CD4-positive, alpha-beta T cell (primary cell): ENCODE measurements at regions of chr1 and their contacts with region 1.

Region 1: DNA sequence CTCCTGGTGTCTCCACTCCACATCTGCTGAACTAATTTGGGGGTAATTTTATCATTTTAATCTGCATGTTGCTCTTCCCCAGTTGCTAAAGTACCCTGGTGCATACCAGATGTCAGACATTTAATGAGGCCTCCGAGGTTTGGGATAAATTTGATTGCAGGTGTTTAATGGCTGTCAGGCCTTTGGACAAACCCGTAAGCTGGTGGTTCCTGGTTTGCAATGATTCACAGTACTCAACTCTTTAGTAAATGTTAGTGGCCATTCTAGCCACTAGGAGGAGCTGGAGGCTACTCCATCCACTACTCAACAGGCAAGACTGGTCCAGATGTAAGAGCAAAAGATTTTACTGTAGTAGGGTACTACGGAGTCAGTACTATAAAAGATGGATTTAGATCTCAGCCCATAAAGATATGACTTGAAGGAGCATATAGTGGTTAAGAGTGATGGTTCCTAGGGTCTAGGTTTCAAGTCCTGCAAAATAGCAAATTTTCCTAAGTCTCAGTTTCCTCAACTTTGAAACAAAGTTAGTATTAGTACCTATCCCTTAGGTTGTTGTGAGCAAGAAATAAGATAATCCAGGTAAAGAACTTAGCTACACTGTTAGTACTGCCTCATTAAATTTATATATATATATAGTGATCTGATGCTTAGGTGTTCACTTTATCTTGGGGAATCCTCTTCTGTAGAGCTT is 132.8 kb downstream of the SNX7 start:
- DNase-seq: peak; percentile 25 to 83 (median 36)
- ATAC-seq: peak; percentile 90
- H3K4me3 ChIP-seq: no peak overlapping the region
- H3K4me3 Mint-ChIP-seq: no peak overlapping the region
- H3K27ac ChIP-seq: no peak overlapping the region
- H3K27ac Mint-ChIP-seq: no peak overlapping the region
- H3K4me1 ChIP-seq: peaks cover 4% of the 10 kb centered on the region
- H3K4me1 Mint-ChIP-seq: peaks cover 35% of the 10 kb centered on the region
- H3K27me3 ChIP-seq: no peaks in the 10 kb centered on the region
- H3K27me3 Mint-ChIP-seq: no peaks in the 10 kb centered on the region
- CTCF ChIP-seq: peak; percentile 76

Region 2: DNA sequence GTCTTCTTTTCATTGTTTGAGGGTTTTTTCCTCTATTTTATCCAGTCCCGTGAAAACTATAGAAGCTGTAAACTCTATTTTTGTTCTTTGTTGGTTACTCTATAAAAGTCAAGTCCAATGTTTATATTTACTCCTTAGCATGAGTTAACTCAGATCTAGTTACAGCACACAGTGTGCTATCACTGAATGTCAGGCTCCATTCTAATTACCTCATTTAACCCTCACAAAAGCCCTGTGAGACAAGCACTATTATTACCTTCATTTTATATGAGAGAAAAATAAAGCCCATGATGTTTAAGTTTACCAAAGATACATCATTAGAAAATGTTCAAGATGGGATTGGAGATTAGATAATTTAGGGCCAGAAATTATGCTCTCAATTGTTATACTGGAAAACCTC is 384.3 kb before region 1 on chr1:
- CTCF ChIA-PET with region 1: no interaction called
- POLR2A ChIA-PET with region 1: no interaction called
- intact Hi-C with region 1: no loop called
- DNase-seq: no peak
- ATAC-seq: no peak
- H3K4me3 ChIP-seq: no peak overlapping the region
- H3K4me3 Mint-ChIP-seq: no peak overlapping the region
- H3K27ac ChIP-seq: no peak overlapping the region
- H3K27ac Mint-ChIP-seq: no peak overlapping the region
- H3K4me1 ChIP-seq: no peaks in the 10 kb centered on the region
- H3K4me1 Mint-ChIP-seq: peaks cover 4% of the 10 kb centered on the region
- H3K27me3 ChIP-seq: no peaks in the 10 kb centered on the region
- H3K27me3 Mint-ChIP-seq: no peaks in the 10 kb centered on the region
- CTCF ChIP-seq: no peak

Region 3: DNA sequence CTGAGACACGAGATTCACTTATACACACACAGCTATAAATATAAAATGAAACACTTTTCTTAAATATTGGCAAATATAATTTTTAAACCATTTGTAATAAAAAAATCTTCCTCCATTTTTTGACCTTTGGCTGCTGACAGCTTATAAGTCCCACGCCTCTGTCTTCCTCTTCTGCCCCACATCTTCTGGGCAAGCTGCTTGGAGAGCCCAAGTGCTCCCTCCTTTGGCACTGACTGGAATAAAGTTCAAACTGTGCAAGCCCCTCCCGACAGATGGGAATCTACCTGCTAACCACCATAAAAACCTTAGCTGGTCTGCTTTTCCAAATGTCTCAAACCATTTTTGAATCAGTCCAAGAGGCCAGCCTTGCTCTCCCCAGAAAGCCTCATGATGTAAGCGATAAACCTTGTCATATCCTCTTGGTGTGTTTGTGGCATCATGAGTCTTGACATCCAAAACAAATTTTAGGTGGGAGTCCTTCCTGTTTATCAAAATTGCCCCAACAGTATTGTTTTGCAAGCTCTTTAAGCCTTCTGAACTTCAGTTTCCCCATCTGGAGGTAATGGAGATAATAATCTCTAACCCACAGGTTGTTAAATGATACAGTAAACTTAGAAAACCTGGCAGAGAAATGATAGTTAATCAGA is 33.0 kb before region 1 on chr1:
- CTCF ChIA-PET with region 1: no interaction called
- POLR2A ChIA-PET with region 1: no interaction called
- intact Hi-C with region 1: no loop called
- DNase-seq: peak in 1 of 14 experiments; percentile 5
- ATAC-seq: no peak
- H3K4me3 ChIP-seq: no peak overlapping the region
- H3K4me3 Mint-ChIP-seq: no peak overlapping the region
- H3K27ac ChIP-seq: no peak overlapping the region
- H3K27ac Mint-ChIP-seq: no peak overlapping the region
- H3K4me1 ChIP-seq: no peaks in the 10 kb centered on the region
- H3K4me1 Mint-ChIP-seq: no peaks in the 10 kb centered on the region
- H3K27me3 ChIP-seq: no peaks in the 10 kb centered on the region
- H3K27me3 Mint-ChIP-seq: no peaks in the 10 kb centered on the region
- CTCF ChIP-seq: no peak

Region 4: GRCh38 chr1:98870959-98871903 is 76.9 kb after region 1 on chr1:
- CTCF ChIA-PET with region 1: interaction called, 3 read pairs
- POLR2A ChIA-PET with region 1: interaction called, 31 read pairs
- intact Hi-C with region 1: loop called in 1 of 2 experiments (anchors 2 kb)
- DNase-seq: peak in 12 of 14 experiments; percentile 8 to 96 (median 41)
- ATAC-seq: peak; percentile 92
- H3K4me3 ChIP-seq: peak overlapping the region; percentile 48
- H3K4me3 Mint-ChIP-seq: peak overlapping the region; percentile 86
- H3K27ac ChIP-seq: peak overlapping the region; percentile 59 to 84
- H3K27ac Mint-ChIP-seq: peak overlapping the region; percentile 91
- H3K4me1 ChIP-seq: peaks cover 18% of the 10 kb centered on the region
- H3K4me1 Mint-ChIP-seq: peaks cover 55% of the 10 kb centered on the region
- H3K27me3 ChIP-seq: no peaks in the 10 kb centered on the region
- H3K27me3 Mint-ChIP-seq: no peaks in the 10 kb centered on the region
- CTCF ChIP-seq: no peak

Region 5: DNA sequence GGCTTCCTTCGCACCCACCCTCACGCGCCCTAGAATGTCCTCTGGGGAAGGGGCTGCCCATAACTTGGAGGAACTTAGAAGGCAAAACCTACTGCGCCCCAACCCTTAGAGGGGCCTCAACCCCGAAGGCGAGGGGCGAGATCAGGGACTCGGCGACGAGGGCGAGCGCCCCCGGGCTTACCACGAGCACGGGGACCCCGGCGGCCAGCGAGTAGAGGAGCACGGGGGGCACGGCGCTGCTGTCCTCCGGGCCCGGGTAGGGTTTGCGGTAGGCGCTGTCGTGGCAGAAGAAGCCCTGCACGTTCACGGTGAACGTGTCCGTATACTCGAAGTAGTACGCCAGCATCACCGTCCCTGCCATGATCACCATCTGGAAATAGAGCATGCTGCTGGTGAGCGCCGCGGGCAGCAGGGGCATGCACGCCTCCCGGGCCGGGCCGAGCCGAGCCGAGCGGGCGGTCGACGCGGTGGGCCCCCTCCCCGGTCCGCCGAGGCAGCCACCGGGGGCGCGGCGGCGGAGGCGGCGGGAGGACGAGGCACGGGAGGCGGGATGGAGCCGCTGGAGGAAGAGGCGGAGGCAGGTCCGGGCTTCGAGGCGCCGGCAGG is 210.0 kb after region 1 on chr1:
- CTCF ChIA-PET with region 1: no interaction called
- POLR2A ChIA-PET with region 1: no interaction called
- intact Hi-C with region 1: loop called (anchors 10 kb)
- DNase-seq: peak in 11 of 14 experiments; percentile 3 to 48 (median 10)
- ATAC-seq: peak; percentile 52
- H3K4me3 ChIP-seq: peak overlapping the region; percentile 33
- H3K4me3 Mint-ChIP-seq: peak overlapping the region; percentile 67
- H3K27ac ChIP-seq: no peak overlapping the region
- H3K27ac Mint-ChIP-seq: no peak overlapping the region
- H3K4me1 ChIP-seq: peaks cover 13% of the 10 kb centered on the region
- H3K4me1 Mint-ChIP-seq: peaks cover 11% of the 10 kb centered on the region
- H3K27me3 ChIP-seq: peaks cover 42 to 45% of the 10 kb centered on the region in 2 experiments
- H3K27me3 Mint-ChIP-seq: peaks cover 87% of the 10 kb centered on the region
- CTCF ChIP-seq: no peak

Region 6: DNA sequence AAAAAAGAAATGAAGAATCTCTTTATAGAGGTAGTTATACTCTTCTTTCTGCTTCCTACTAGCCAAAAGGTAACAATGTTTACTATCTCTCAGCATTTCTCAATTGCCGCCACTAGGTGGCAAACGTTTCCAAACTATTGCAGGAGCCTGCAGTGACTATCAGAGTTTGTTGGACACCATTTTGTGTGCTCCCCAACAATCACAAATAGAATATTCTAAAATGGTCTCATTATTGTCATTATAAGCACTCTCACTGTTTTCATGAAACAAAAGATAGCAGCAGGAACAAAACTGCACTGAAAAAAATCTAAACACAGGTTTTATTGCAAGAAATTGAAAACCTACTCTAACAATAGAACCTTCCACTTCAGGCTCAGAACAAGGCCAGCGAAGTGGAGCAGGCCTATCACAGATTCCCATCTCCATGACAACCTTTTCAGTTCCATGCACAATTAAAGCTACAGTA is 386.0 kb after region 1 on chr1:
- CTCF ChIA-PET with region 1: interaction called, 3 read pairs
- POLR2A ChIA-PET with region 1: no interaction called
- intact Hi-C with region 1: loop called (anchors 5 to 10 kb)
- DNase-seq: peak; percentile 21 to 77 (median 43)
- ATAC-seq: peak; percentile 80
- H3K4me3 ChIP-seq: no peak overlapping the region
- H3K4me3 Mint-ChIP-seq: no peak overlapping the region
- H3K27ac ChIP-seq: no peak overlapping the region
- H3K27ac Mint-ChIP-seq: no peak overlapping the region
- H3K4me1 ChIP-seq: no peaks in the 10 kb centered on the region
- H3K4me1 Mint-ChIP-seq: no peaks in the 10 kb centered on the region
- H3K27me3 ChIP-seq: no peaks in the 10 kb centered on the region
- H3K27me3 Mint-ChIP-seq: no peaks in the 10 kb centered on the region
- CTCF ChIP-seq: peak; percentile 90

Region 7: GRCh38 chr1:99707535-99708142 is 913.3 kb after region 1 on chr1:
- CTCF ChIA-PET with region 1: no interaction called
- POLR2A ChIA-PET with region 1: no interaction called
- intact Hi-C with region 1: loop called in 1 of 2 experiments (anchors 2 kb)
- DNase-seq: peak; percentile 8 to 71 (median 34)
- ATAC-seq: peak; percentile 57
- H3K4me3 ChIP-seq: no peak overlapping the region
- H3K4me3 Mint-ChIP-seq: no peak overlapping the region
- H3K27ac ChIP-seq: no peak overlapping the region
- H3K27ac Mint-ChIP-seq: no peak overlapping the region
- H3K4me1 ChIP-seq: peaks cover 13% of the 10 kb centered on the region
- H3K4me1 Mint-ChIP-seq: peaks cover 9% of the 10 kb centered on the region
- H3K27me3 ChIP-seq: no peaks in the 10 kb centered on the region
- H3K27me3 Mint-ChIP-seq: no peaks in the 10 kb centered on the region
- CTCF ChIP-seq: peak; percentile 73